Left colon (tissue), 2 donors: ENCODE measurements at regions of chr7 and their contacts with region 1.

Region 1: DNA sequence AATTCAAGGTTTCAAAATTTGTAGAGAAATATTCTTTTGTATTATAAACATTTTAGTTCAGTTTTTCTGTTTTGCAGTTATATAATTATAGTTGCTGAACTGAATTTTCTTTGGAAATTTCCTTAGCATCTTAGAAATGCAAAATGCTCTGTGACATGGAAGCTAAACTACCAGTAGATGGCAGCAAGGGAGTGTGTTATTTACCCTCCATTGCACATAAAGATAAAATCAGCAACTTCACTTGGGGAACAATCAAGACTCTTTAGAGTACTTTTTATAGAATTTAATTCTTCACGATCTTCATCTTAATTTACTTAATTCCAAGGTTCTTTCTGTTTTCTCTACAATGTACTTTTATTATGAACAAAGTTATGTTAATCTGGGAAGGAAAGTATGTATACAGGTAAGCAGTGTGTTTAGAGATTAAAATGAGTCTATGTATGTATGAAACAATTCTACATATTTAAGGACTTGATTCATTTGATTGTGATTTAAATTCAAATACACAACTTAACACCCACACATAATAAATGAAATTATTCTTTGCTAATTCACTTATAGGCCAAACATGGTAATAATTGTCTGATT is 404.2 kb downstream of the THSD7A start:
- DNase-seq: no peak
- ATAC-seq: peak; percentile 67

Region 2: DNA sequence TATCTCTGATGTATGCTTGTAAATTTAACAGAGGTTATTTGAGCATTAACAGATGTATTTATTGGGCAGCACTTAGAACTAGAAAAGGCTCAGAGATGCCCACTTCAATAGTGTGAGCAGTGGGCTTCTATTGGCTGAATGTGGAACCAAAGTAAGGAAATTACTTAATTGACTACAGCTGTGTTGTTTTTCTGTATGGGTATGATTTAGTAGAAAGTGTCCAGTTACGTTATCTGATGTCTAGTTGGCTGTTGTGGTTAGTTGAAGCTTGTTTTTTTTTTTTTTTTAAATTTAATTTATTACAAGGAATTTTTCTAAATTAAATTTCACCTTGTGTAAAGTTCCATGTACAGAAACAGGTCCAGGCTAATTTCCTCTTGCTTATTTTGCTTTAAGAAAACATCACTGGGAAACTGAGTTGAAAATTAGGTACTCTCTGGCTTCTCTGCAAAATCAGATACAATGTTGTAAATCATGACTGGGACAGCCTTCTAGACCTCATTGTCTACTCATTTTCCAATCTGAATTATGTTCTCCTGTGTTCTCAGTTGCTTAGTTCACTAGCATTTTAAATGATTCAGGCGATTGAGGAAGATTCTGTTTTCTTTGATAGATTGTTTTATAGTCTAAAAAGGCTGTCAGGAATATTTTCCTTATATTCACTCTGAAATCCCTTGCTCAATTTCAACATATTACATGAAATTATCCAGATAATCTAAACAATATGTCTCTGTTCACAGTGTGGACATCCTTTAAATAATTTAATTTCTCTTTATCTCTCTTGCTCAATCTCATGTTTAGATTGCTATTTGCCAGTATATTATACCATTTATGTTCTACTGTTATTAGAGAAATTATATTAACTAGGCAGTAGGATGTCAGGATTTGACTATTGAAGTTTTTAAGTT is 401.1 kb before region 1 on chr7:
- intact Hi-C with region 1: no loop called
- DNase-seq: no peak
- ATAC-seq: no peak

Region 3: GRCh38 chr7:11355399-11356005 is 72.3 kb before region 1 on chr7:
- intact Hi-C with region 1: no loop called
- DNase-seq: no peak
- ATAC-seq: no peak

Region 4: DNA sequence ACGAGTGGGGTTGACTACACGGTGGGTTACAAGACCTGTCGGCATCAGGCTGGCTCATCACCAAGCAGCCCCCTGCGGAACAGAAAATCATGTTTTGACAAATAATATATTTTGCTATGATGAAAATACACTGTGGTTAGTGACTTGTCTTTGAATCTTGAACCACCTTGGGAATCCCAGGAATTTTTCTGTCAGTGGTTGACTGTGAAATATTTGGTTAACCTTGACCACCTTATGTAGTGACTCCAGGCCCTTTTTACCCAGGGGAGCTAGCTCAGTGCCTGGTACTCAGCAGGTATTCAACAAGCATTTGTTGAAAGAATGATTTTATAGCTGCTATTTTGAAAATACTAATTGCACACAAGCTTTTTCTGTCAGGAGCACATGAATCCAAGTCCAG is 48.1 kb before region 1 on chr7:
- intact Hi-C with region 1: no loop called
- DNase-seq: no peak
- ATAC-seq: no peak

Region 5: DNA sequence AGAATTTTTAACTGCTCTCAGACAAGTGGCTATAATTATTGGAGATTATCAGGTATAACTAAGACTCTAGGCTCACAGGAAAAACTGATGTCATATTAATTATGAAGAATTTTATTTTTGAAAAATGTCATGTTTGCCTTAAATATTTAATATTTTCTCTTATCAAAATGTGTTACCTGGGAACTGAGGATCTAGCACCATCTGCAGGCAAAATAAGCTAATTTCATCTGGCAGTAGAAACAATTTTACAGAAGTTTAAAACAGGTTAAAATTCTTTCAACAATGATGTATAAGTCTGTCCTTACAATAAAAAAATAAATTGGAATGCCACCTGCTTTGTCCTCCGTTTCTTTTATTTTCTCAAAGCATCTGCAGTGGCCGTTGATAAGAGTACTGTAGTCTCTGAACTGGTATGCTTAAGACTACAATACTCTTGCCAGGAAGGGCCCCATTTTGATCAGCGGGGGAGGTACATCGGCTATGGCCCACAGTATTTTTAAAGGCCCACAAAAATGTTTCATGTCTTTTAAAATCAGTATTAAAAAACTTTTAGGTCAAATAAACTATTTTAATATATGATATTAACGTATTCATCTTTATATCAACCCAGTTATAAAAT is 894.6 kb after region 1 on chr7:
- intact Hi-C with region 1: loop called in 1 of 2 experiments (anchors 10 kb)
- DNase-seq: no peak
- ATAC-seq: no peak